Activated naive CD4-positive, alpha-beta T cell treated with anti-CD3 and anti-CD28 coated beads for 36 hours (primary cell): ENCODE measurements at regions of chr4 and their contacts with region 1.

Region 1: GRCh38 chr4:59247032-59247431 is 1953.1 kb upstream of the ADGRL3 start:
- DNase-seq: no peak
- H3K4me3 Mint-ChIP-seq: no peak overlapping the region
- H3K27ac Mint-ChIP-seq: no peak overlapping the region
- H3K4me1 Mint-ChIP-seq: no peaks in the 10 kb centered on the region
- H3K27me3 Mint-ChIP-seq: no peaks in the 10 kb centered on the region

Region 2: DNA sequence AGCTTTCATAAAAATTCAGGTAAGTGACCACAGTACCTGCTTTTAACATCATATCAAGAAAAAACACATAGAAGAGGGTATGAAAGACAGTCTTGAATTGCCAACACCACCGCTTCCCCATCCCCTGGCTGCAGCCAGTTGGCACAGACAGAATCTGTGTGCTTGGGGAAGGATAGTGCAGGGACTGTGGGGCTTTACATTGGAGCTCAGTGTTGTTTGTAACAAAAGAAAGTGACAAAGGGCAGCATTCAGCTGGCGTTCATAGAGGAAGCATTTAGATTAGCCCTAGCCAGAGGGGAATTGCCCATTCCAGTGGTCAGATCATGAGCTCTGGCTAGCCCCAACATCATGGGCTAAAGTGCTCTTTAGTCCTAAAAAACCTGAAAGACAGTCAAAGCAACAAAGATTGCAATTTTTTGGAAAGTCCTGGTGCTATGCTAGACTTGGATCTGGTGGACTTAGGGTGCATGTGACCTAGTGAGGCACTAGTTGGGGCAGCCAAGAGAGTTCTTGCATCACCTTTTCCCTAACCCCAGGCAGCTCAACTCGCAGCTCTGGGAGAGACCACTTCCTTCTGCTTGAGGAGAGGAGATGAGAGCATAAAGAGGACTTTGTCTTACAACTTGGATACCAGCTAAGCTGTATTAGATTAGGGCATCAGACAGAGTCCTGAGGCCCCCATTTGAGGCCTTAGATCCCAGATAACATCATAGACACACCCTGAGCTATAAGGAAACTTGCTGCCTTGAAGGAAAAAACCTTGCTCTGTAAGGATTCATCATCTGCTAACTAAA is 350.7 kb after region 1 on chr4:
- CTCF ChIA-PET with region 1: no interaction called
- intact Hi-C with region 1: no loop called
- DNase-seq: no peak
- H3K4me3 Mint-ChIP-seq: no peak overlapping the region
- H3K27ac Mint-ChIP-seq: no peak overlapping the region
- H3K4me1 Mint-ChIP-seq: no peaks in the 10 kb centered on the region
- H3K27me3 Mint-ChIP-seq: no peaks in the 10 kb centered on the region

Region 3: DNA sequence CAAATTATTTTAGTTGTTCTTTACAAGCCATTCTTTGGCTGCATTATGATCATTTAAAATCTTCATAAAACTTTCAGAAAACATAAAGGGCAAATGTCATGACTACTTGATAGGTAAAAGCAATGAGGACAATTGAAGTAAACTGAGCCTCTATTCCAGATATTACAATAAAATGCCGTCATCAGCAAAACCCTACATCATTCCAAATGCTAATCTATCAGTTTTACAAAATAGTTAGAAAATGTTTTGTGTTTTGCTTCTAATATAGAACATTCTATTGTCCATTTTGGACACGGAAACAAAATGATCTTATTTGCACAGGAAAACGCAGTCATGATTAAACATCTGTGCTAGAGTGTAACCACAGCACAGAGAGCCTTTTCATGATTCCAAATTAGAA is 622.5 kb after region 1 on chr4:
- CTCF ChIA-PET with region 1: no interaction called
- intact Hi-C with region 1: loop called (anchors 10 kb)
- DNase-seq: no peak
- H3K4me3 Mint-ChIP-seq: no peak overlapping the region
- H3K27ac Mint-ChIP-seq: no peak overlapping the region
- H3K4me1 Mint-ChIP-seq: no peaks in the 10 kb centered on the region
- H3K27me3 Mint-ChIP-seq: no peaks in the 10 kb centered on the region

Region 4: DNA sequence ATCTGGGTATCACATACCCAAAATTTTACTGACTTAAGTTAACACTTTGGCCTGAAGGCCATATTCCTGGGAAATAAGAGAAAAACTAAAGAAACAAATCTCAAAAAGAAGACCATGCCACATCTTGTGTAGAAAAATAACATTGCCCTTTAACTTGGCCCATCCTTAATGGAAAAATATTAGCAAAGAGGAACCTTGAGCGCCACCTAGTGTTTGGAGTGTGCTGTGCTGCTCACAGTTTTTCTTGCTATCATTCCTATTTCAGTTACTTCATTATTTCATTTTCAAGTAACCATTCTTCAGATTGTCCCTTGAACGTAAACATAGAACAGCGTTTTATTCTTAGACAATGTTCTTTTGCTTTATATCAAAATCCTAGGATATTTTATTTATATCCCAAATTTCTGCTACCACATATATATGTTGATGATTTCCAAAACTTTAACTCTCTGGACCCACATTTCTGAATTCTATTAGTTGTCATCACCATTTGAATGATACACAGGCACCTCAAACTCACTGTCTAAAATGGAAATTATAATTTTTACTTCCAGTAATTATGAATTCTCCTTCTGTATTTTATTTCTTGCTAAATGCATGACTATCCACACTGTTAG is 954.1 kb after region 1 on chr4:
- CTCF ChIA-PET with region 1: no interaction called
- intact Hi-C with region 1: loop called (anchors 5 kb)
- DNase-seq: peak; percentile 57
- H3K4me3 Mint-ChIP-seq: no peak overlapping the region
- H3K27ac Mint-ChIP-seq: no peak overlapping the region
- H3K4me1 Mint-ChIP-seq: no peaks in the 10 kb centered on the region
- H3K27me3 Mint-ChIP-seq: no peaks in the 10 kb centered on the region